ENCODE measurements at regions of chr7 and their contacts with region 1.

Region 1: GRCh38 chr7:74206589-74207120 is 3.2 kb upstream of the LAT2 start:
- DNase-seq: peak; percentile 97

Region 2: GRCh38 chr7:73865738-73866445 is 340.8 kb before region 1 on chr7:
- intact Hi-C with region 1: loop called (anchors 10 kb)
- DNase-seq: no peak

Region 3: DNA sequence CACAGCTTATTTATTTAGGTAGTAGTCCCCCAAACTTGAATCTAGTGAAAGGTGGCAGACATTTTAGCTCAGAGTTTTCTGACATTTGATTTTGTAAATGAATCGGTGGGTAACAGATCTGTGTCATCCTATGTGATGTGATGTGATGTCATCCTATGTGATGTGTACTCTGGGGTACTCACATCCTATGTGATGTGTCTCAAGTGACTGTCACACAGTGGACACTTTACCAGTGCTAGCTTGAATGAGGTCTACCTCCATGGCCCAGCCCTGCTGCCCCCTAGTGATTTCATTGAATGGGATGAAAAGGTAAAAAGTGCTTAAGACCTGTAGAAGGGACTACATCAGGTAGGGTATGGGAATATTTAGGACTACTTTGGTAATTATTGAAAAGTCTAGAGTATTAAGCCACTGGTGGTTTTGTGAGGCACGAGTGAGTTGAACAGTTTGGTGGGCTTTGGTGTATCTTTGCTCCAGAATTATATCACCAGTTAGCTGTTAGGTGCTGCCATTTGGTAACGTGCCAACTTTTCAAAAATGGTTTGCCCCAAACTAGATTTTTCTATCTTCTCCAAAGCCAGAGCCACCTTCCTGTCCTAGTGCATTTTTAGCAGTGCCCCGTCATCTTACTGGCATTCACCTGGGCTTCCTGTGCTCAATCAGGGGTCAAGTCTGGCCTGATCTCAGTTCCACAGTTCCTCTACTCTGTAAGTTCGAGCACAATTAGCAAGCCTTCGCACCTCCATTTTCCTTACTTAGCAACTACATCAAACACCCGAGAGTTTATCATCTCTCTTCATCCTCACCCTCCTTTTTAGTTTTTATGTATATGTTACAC is 22.8 kb before region 1 on chr7:
- intact Hi-C with region 1: no loop called
- DNase-seq: no peak

Region 4: DNA sequence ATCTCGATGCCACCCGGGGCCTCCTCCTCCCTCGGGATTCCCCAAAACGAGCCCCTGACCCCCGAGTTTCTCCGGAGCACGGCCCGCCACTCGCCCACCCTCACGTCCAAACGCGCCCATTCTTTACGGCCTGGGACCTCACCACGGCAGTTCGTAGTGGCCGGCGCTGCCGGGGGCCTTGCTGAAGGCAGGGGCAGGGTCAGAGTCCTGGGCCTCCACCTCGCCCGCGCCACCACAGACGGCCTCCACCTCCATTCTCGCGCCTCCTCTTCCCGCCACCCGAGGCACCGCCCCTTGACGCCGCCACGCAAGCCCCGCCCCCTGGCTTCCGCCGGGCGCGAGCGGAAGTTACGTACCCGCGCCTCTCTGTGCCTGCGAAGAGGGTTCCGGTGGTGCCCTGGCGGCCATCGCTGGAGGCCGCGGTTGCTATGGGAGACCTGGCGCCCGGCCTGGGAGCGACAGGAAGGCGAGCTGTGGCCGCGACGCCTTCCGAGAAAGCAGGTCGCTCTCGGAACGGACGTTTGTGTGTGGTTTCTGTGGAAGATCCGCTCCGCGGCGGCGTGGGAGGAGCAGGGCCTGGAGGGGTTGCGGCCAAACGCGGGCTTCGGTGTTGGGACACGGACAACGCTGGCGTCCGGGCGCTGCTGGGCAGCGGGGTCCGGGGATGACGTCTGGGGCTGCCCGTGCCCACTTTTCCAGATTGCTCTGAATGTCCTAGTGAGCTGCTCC is 47.6 kb after region 1 on chr7 and contains the start of gene RFC2:
- intact Hi-C with region 1: loop called in 1 of 2 experiments (anchors 10 kb)
- DNase-seq: peak; percentile 99
- total RNA-seq, gene RFC2: 12.5 to 12.8 TPM

Region 5: GRCh38 chr7:74401137-74401859 is 194.6 kb after region 1 on chr7:
- intact Hi-C with region 1: loop called (anchors 2 kb)
- DNase-seq: peak; percentile 84

Region 6: DNA sequence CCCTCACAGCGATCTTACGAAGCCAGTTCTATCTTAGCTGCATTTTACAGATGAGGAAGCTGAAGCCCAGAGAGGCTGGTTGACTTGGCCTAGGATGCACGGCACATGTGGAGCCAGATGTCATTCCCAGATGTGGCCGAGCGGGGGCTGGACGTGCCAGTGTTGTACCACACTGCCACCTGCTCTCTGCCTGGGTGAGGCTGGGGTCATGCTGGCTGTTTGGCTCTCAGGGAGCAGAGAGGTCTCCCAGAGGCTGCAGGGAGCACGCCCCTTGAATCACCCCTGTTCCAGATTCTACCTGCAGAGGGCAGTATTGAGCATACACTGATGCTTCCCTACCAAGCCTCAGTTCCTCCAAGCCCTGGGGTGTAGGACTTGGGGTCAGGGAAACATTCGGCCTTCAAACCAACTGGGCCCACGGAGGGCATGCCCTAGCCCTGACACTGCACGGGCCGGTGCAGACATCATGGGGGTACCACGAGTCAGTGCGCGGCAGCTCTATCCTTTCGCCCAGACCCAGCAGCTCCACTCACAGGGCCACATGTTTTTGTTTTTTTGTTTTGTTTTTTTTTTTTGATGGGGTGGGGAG is 243.2 kb after region 1 on chr7:
- intact Hi-C with region 1: no loop called
- DNase-seq: no peak